ENCODE measurements at regions of chr11 and their contacts with region 1.

Region 1: GRCh38 chr11:116772443-116773202 is at the start of gene BUD13:
- DNase-seq: peak; percentile 96
- ATAC-seq: peak; percentile 90 to 96 (median 93)
- H3K4me3 ChIP-seq: peak within 1 kb of the TSS; percentile 99
- H3K4me3 Mint-ChIP-seq: peak within 1 kb of the TSS; percentile 99
- H3K27ac ChIP-seq: peak within 1 kb of the TSS; percentile 95
- H3K27ac Mint-ChIP-seq: peak within 1 kb of the TSS; percentile 97 to 98
- H3K4me1 ChIP-seq: peaks cover 15% of the 10 kb centered on the region
- H3K4me1 Mint-ChIP-seq: peaks cover 26 to 32% of the 10 kb centered on the region in 2 donors
- H3K27me3 ChIP-seq: no peaks in the 10 kb centered on the region
- H3K27me3 Mint-ChIP-seq: no peaks in the 10 kb centered on the region
- CTCF ChIP-seq: no peak
- total RNA-seq, gene BUD13: 13.5 to 16.0 (median 13.7) TPM

Region 2: DNA sequence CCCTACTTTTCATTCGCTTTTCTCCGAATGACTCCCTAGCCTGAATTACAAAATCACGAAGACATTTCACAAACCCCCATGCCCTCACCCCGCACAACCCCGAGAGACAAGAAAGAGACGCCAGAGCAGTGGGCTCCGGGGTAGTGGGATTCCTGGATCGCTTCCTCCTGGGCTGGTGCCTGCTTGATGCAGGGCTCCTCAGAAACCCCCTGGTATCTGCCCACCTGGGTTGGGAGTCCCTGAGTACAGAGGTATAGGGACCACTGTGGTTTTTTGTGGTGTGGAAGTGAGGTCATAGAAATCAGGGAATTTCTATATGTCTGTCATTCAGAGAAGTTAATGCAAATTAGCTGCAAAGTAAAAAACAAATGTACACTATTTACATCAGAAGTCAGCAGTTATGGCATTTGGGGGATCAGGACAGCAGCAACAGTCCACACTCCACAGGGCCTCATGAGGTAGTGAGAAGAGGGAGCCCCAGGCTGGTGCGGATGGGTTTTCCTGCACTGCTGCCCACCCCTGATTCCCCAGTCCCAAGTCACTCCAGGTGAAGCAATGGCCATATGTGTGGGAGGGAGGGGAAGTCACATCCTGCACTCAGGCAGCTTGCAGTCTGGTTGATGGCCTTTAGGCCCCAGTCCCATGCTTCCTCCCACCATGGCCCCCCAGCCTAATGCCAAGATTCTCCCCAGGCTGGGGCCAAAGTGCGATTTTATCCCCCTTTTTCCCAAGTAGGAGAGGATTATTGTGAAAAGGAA is 39.4 kb before region 1 on chr11:
- intact Hi-C with region 1: no loop called
- DNase-seq: no peak
- ATAC-seq: peak in 1 of 3 donors; percentile 22
- H3K4me3 ChIP-seq: no peak overlapping the region
- H3K4me3 Mint-ChIP-seq: no peak overlapping the region
- H3K27ac ChIP-seq: no peak overlapping the region
- H3K27ac Mint-ChIP-seq: peak overlapping the region in 1 of 2 donors; percentile 35
- H3K4me1 ChIP-seq: peaks cover 7% of the 10 kb centered on the region
- H3K4me1 Mint-ChIP-seq: peaks cover 12 to 16% of the 10 kb centered on the region in 2 donors
- H3K27me3 ChIP-seq: no peaks in the 10 kb centered on the region
- H3K27me3 Mint-ChIP-seq: peaks cover 0 to 4% of the 10 kb centered on the region in 2 donors
- CTCF ChIP-seq: peak; percentile 5

Region 3: DNA sequence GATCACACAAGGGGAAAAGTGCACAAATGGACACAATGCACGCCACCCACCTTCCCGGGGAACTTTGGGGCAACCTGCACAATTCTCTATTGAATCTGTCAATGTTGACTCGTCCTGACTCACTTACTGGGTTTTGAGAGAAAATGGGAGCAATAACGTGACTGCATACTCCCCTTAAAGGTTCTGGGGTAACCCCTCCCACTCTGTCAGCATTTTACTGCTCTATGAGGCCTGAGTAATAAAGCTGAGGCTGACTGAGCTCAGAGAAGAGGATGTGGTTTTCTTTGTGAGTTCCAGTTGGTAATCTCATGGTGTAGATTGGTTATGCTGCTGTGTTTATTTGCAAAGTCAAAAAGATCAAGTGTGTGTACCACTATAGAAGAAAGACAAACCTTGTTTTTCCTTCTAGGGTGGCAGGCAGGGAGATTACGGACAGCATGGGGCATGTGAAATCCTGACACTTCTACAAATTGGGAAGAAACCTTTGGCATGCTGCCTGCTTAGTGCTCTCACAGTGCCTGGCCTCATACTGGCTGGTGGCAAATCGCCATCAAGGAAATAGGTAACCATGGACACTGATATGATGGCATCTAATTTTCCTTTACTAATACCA is 80.9 kb after region 1 on chr11:
- intact Hi-C with region 1: loop called (anchors 5 kb)
- DNase-seq: peak; percentile 30 to 88
- ATAC-seq: peak; percentile 91 to 96 (median 94)
- H3K4me3 ChIP-seq: no peak overlapping the region
- H3K4me3 Mint-ChIP-seq: peak overlapping the region; percentile 88
- H3K27ac ChIP-seq: peak overlapping the region; percentile 73
- H3K27ac Mint-ChIP-seq: peak overlapping the region; percentile 92 to 93
- H3K4me1 ChIP-seq: peaks cover 58% of the 10 kb centered on the region
- H3K4me1 Mint-ChIP-seq: peaks cover 65 to 69% of the 10 kb centered on the region in 2 donors
- H3K27me3 ChIP-seq: no peaks in the 10 kb centered on the region
- H3K27me3 Mint-ChIP-seq: no peaks in the 10 kb centered on the region
- CTCF ChIP-seq: no peak

Measured in natural killer cell (primary cell).